Dendritic cell treated with granulocyte-macrophage colony-stimulating factor and Interleukin-4, amounts not matched to agents 40 ng/mL and 50 ng/mL, for 4 days (primary cell): ENCODE measurements at regions of chr15 and their contacts with region 1.

Region 1: DNA sequence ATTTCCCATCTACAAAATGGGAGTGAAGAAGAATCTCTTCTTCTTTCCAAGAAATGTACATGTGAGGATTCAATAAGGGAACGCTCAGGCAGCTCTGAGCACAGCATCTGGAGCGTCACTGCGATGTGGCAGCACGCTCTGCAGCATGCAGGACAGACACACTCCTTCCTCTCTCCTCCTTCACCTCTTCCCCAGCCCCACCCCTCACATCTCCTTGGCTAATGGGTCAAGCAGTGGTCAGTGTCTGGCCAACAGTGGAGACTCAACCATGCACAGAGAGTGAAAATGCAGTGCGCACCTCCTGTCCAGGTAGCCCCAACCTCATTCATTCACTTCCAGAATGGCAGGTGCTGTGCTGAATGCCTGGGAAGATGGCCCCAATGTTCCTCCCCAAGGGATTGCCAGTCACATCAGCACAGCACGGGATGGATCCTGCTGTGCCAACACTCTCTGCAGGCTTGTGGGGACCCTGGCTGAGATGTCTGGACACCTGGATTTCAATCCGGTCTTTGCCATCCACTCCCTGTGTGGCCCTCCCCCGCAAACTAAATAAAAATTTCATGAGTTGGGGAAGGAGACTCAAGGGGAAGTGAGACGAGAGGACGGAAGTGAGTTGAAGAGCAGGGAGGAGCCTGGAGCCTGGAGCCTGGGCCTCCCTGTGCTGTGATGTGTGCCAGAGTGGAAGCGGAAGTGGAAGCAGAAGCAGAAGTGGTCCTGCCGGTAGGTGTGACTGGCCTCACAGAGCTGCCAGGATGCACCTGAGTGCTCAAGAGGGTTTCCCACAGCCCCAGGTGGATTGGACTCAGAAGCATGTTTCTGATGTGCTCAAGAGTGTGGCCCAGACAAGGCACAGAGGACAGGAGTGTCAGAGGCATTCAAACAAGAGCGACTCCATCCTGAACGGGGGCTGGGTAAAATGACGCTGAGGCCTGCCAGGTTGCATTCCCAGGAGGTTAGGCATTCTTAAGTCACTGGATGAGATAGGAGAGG is 163.9 kb downstream of the SMAD6 start:
- H3K4me3 Mint-ChIP-seq: no peak overlapping the region
- H3K27ac Mint-ChIP-seq: peak overlapping the region; percentile 66
- H3K4me1 Mint-ChIP-seq: peaks cover 57% of the 10 kb centered on the region
- H3K27me3 Mint-ChIP-seq: peaks cover 16% of the 10 kb centered on the region

Region 2: GRCh38 chr15:66851226-66852071 is 14.5 kb before region 1 on chr15:
- intact Hi-C with region 1: no loop called
- H3K4me3 Mint-ChIP-seq: peak overlapping the region; percentile 43
- H3K27ac Mint-ChIP-seq: peak overlapping the region; percentile 27
- H3K4me1 Mint-ChIP-seq: peaks cover 15% of the 10 kb centered on the region
- H3K27me3 Mint-ChIP-seq: peaks cover 30% of the 10 kb centered on the region

Region 3: GRCh38 chr15:66901336-66902100 is 35.6 kb after region 1 on chr15:
- intact Hi-C with region 1: loop called (anchors 5 kb)
- H3K4me3 Mint-ChIP-seq: no peak overlapping the region
- H3K27ac Mint-ChIP-seq: peak overlapping the region; percentile 91
- H3K4me1 Mint-ChIP-seq: peaks cover 68% of the 10 kb centered on the region
- H3K27me3 Mint-ChIP-seq: peaks cover 3% of the 10 kb centered on the region